ENCODE measurements at regions of chr12 and their contacts with region 1.

Region 1: DNA sequence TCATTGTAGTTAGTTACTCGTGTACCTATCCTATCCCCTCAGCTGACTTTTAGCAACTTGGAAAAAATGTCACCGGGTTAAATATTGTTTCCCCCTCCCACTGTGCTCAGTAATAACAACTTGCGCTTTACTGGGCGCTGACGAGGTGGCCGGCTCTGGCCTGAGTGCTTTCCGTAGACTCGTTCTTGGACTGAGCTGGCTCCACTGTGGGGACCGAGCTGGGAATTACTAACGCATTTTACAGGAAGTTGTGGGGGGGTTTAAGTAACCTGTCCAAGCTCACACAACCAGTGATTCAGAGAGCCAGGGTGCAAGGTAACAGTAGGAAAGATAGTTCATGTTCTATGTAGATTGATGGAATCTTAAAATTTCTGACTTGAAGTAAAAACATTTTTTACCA is 82.5 kb upstream of the KICS2 start:
- DNase-seq: no peak
- H3K4me3 ChIP-seq: no peak overlapping the region
- H3K27ac ChIP-seq: no peak overlapping the region
- H3K4me1 ChIP-seq: no peaks in the 10 kb centered on the region
- H3K27me3 ChIP-seq: peaks cover 1% of the 10 kb centered on the region
- CTCF ChIP-seq: no peak

Region 2: DNA sequence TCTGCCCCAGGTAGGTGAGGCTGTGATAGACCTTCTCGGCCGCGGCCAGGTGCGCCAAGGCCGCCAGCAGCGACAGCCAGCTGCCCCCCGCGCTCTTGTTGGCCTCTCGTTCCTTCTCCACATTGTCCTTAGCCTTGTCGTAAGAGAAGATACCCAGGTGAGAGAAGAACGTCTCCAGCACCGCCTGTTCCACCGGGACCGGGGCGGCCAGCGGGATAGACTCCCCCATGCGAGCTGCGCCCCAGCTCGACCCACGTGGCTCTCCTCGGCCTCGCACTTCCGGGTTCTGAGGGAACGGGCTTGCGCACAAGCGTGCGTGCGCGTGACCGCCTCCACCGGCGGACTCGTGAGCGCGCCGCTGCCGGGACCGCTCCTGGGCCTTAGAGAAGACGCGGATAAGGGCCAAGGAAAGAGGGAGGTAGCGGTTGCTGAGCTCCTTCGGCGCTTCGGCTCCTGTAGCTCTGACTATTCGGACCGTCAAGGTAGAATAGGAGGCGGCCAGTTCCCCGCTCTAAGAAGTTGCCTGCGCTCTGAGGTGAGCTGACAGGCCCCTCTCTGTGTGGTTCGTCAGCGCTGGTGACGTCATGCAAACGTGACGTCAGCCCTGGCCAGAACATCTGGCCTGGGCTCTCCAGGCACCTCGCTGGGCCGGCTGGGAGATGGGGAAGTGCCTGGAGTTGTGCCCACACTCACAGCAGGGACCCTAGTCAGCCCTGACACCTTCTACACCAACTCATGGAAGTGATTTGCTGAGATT is 82.4 kb before region 1 on chr12 and contains the start of gene KICS2:
- CTCF ChIA-PET with region 1: no interaction called
- dilution Hi-C with region 1: no loop called
- in situ Hi-C with region 1: no loop called
- intact Hi-C with region 1: no loop called
- DNase-seq: peak; percentile 93
- H3K4me3 ChIP-seq: peak within 1 kb of the TSS; percentile 79 to 94 (median 85)
- H3K27ac ChIP-seq: peak within 1 kb of the TSS; percentile 91
- H3K4me1 ChIP-seq: peaks cover 11% of the 10 kb centered on the region
- H3K27me3 ChIP-seq: no peaks in the 10 kb centered on the region
- CTCF ChIP-seq: no peak
- total RNA-seq, gene KICS2: 10.7 to 14.5 TPM

Region 3: GRCh38 chr12:64332938-64333337 is 28.4 kb after region 1 on chr12:
- CTCF ChIA-PET with region 1: no interaction called
- dilution Hi-C with region 1: no loop called
- in situ Hi-C with region 1: no loop called
- intact Hi-C with region 1: loop called (anchors 2 kb)
- DNase-seq: peak; percentile 82
- H3K4me3 ChIP-seq: no peak overlapping the region
- H3K27ac ChIP-seq: no peak overlapping the region
- H3K4me1 ChIP-seq: peaks cover 8% of the 10 kb centered on the region
- H3K27me3 ChIP-seq: no peaks in the 10 kb centered on the region
- CTCF ChIP-seq: no peak